ENCODE measurements at regions of chr20 and their contacts with region 1.

Region 1: DNA sequence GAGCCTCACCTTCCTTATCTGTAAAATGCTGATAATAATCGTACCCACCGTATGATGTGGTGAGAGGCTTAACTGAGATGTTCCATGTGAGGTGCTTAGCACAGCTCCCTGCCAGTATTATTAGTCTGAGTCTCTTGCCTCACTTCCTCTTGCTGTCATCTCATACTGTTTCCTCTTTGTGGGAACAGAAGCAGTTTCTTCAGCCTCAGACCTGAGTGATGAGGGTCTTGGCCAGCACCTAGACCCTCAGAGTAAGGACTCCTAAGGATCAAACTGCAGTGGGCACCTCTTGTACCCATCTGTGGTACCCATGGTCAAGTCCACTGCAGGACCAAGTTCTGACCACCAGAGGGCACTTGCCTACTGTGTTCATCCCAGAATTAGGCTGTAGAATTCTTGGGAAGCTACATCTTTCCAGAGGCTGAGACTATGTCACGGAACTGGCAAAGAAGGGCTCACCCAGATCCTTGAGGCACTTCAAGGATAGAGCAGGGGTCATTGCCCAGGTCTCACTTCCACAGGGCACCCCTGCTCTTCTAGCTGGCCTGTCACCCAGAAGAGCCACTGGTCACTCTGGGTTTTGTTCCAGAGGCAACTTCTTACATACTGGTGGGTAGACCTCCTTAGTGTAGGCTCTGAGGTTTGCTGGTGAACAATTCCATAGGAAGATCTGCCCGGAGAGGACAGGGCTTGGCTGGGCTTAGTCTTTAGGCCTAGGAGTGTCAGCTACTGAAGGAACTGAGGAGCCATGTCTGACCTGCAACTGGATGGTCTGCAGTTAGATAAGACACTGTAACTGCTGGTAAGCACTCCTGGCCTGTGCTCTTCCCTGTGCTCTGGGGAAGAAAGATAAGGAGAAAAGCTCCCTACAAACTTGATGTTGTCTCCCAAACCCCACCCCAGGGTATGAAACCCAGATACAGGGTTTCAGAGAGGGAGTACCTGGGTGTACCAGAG is 20.6 kb upstream of the SGK2 start:
- DNase-seq: peak; percentile 71
- ATAC-seq: peak; percentile 79

Region 2: DNA sequence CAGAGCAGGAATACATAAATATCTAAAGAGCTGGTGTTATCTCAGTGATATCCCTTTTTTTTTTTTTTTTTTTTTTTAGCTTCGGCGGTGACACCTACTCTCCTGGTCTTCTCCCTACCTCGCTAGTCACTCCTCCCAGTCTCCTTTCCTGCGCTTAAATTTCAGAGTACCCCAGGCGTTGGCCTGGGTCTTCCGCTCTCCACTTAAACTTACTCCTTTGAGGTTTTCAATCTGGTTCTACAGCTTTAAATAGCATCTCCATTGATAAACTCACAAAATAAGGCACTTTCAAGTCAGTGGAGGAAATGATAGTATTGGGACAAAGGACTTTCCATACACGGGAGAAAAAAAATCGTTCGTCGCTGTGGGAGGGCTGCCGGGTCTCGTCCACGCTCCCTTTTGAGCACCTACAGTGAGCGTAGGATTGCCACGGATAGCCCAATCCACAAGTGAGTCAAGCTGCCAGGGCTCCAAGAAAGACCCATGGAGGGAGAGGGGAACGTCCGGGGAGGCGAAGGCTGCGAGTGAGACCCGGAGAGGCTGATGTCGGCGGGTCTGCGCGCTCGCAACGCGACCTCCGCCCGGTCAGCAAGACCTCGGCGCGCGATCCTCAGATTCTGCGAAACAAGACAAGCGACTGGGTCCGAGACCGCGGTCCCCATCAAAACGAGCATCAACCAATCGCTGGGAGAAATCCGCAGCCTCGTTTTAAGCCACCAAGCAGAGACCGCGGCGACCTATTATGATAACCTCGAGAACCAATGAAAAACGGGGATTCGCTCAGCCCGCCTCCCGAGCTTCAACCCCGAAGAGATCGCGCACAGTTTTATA is 81.2 kb before region 1 on chr20:
- intact Hi-C with region 1: no loop called
- DNase-seq: peak; percentile 93
- ATAC-seq: peak; percentile 89

Region 3: DNA sequence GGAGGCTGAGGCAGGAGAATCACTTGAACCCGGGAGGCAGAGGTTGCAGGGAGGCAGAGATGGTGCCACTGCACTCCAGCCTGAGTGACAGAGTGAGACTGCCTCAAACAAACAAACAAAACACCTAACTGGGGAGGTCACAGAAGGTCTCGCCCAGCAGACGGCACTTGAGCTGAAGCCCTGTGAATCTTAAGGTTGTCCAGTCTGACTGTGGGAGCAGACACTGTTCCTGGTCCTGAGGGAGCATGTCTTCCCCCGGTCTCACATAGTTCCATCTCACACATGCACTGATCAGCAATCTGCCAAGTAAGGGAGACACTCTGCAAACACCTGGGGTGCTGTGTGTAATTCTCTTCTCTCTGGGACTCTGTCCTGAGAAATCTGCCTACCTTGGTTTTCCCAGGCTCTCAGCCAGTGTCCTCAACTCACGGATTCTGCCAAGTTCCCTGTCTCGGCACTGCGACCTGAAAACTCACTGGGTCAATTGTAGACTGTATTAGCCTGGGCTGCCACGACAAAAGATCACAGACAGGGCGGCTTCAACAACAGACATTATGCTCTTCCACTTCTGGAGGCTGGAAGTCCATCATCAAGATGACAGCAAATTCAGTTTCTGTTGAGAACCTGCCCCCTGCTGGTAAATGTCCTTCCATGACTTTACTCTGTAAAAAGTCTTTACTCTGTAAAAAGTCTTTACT is 554.5 kb after region 1 on chr20:
- intact Hi-C with region 1: loop called (anchors 10 kb)
- DNase-seq: no peak
- ATAC-seq: no peak